Sigmoid colon (tissue), 7 donors: ENCODE measurements at regions of chr2 and their contacts with region 1.

Region 1: DNA sequence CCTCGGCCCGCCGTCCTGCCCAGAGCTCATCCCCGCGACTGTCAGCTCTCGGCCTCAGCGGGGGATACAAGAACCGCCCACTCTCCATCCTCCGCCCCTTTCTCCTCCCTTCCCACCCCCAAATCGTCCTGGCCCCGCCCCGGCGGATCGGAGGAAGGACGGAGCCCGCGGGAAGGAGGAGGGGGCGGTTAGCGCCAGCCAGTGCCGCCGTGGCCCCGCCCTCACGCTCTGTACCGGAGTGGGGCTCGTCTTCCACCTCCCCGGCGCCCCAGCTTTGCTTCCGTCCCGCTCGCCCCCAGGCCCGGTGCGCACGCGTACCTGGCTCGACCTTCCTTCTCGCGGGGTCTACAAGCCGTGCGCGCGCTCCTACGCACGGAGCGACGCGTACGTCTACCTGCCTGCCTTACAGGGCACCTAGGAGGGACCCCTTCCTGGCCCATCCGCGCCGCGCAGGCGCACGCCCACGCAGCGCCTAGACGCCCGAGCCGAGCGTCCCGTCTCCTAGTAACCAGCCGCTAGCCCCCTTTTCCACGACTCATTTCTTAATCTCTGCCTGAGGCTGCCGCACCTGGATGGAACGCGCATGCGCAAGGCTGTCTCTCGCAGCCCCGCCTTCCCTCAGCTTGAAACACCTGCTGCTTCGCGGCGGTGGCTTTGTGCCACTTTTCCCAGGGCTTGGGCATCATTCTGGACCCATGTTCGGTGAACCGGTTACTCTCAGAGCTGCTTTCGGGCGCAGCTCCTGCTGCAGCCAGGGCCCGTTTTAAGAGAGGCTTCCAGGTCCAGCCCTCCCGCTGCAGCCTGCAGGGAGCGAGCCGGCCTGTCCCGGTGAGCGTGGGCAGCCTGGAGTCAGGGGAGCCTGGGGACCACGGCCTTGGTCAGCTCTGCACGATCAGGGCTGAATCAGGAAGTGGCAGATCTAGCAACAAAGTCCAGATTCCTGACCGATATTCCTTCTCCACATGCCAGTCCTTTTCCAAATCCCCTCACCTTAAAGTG is at the start of gene C2orf15:
- DNase-seq: peak; percentile 95
- H3K4me3 ChIP-seq: peak within 1 kb of the TSS; percentile 73 to 97 (median 83)
- H3K27ac ChIP-seq: peak within 1 kb of the TSS; percentile 81 to 87 (median 82)
- H3K4me1 ChIP-seq: peaks cover 0 to 16% (median 11%) of the 10 kb centered on the region in 4 donors
- H3K27me3 ChIP-seq: no peaks in the 10 kb centered on the region
- CTCF ChIP-seq: no peak
- EP300 ChIP-seq: no peak
- POLR2A ChIP-seq: peak in 1 of 2 donors; percentile 72
- total RNA-seq, gene C2orf15: not detected

Region 2: DNA sequence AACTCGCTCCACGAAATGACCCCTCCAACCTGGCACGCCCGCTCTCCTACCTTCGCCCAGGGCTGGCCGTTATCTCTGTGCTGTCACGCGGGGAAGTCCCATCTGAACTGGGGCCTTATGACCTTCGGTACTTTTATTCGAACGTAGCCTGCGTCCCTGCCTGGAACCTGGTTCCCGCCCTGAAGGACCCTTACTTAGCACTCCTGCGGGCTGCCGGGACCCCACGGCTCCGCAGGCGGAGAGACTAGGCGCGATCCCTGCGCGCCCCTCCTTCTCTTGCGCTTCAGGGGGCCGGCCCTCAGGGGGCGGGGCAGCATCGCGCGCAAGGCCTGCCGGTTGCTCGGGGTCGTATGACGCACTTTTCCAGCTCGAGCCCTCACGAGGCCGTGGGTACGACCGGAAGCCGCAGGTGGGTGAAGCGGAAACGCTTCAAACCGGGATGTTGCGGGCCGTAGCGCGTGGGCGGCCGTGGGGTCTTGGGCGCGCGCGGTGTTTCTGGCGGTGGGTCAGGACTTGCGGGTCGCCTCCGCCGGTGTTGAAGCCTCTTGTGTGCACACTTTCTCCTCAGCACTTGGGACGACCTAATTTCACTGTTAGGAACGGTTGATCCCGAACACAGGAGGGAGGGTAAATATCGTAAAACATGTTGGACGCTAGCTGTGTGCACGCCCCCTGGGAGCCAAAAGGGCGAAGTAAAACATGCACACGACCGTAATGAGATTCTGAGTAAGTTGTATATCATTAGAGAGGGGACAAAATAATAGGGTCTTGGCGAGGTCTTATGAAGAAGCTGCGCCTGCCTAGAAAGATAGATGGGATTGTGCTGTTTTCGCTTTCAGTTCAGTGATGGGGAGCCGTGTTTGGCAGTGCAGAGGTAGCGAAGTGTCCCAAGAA is 13.5 kb after region 1 on chr2 and contains the starts of genes LIPT1 and TSGA10:
- intact Hi-C with region 1: loop called (anchors 1 kb)
- DNase-seq: peak; percentile 97
- H3K4me3 ChIP-seq: peak within 1 kb of the TSS; percentile 61 to 85 (median 66)
- H3K27ac ChIP-seq: peak within 1 kb of the TSS; percentile 83 to 91 (median 84)
- H3K4me1 ChIP-seq: peaks cover 0 to 19% (median 18%) of the 10 kb centered on the region in 4 donors
- H3K27me3 ChIP-seq: no peaks in the 10 kb centered on the region
- CTCF ChIP-seq: no peak
- EP300 ChIP-seq: peak in 1 of 4 donors; percentile 96
- POLR2A ChIP-seq: peak; percentile 68 to 78
- total RNA-seq, gene LIPT1: 4.8 to 9.5 (median 7.4) TPM
- total RNA-seq, gene TSGA10: 1.4 to 8.4 (median 3.8) TPM

Region 3: GRCh38 chr2:99180755-99181623 is 39.6 kb after region 1 on chr2 and contains the starts of genes MITD1 and MRPL30:
- intact Hi-C with region 1: loop called (anchors 5 kb)
- DNase-seq: peak; percentile 96
- H3K4me3 ChIP-seq: peak within 1 kb of the TSS; percentile 61 to 81 (median 77)
- H3K27ac ChIP-seq: peak within 1 kb of the TSS; percentile 76 to 81 (median 78)
- H3K4me1 ChIP-seq: peaks cover 0 to 38% (median 34%) of the 10 kb centered on the region in 4 donors
- H3K27me3 ChIP-seq: no peaks in the 10 kb centered on the region
- CTCF ChIP-seq: no peak
- EP300 ChIP-seq: no peak
- POLR2A ChIP-seq: peak in 1 of 2 donors; percentile 34
- total RNA-seq, gene MITD1: 18.3 to 30.9 (median 23.5) TPM
- total RNA-seq, gene MRPL30: 36.4 to 40.5 (median 38.1) TPM